ENCODE measurements at regions of chr4 and their contacts with region 1.

Region 1: DNA sequence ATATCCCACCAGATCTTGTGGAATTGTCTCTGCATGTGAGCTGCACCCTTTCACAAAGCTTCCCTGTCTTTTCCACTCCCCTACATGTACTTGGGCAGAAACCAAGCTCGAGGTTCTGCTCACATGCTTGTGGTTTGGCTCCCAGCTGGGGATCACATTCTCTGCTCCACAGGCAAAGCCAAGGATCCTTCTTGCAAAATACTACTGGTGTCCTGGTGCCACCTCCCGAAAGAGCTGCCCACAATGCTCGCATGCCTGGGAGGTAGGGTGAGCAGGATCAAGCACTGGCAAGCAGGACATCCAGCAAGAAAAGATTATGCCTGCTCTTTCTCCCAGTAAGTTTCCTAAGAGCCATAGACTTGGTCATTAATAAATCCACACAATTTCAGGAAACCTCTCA is 45.1 kb upstream of the PPARGC1A start:
- DNase-seq: peak; percentile 61
- ATAC-seq: peak; percentile 74

Region 2: DNA sequence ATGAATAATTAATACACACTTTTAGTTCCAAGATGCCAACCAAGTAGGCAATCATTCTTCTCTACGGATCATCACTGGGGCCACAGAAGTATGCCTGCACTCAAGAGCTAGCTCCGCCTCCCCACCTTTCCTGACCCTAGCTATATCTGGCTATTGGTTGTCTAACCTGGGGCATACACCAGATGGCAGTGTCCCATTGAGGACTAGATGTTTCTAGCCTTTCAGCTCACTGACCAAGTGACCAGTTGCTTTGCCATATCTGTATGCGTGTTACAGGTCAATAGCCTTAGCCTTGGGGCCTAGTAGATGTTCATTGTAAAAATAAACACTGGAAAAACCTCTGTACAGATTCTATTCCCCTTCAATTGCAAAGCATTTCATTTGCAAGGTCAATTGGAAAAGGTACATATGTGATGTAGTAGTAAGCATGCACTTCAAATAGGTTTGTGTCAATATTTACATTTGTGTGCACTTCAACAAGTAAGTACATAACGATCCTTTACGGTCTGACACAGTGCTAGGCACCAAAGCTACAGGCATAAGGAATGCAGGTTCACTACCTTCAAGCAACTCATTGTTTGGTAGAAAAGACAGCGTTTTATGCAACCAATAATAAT is 566.7 kb before region 1 on chr4:
- intact Hi-C with region 1: loop called (anchors 2 kb)
- DNase-seq: no peak
- ATAC-seq: peak; percentile 87

Region 3: DNA sequence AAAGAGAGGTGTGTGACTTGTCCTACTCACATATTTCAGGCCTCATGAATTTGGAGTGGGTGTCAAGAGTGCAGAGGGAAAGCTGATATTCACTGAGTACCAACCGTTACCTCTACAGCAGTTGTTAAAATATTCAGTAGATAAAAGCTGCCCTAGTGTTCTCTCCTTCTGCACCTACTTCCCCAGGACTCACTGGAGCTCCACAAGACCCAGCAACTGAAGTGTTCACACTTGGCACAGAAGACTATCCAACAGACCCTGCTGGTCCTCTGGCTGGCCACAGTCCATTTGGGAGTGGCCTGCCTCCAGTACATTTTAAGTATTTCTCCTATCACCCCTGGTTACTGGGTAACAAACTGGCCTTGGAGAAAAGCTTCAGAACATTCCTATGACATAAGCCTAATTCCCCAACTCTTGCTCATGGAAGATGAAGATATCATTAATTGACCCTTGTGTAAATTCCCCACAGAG is 115.8 kb before region 1 on chr4:
- intact Hi-C with region 1: loop called (anchors 5 kb)
- DNase-seq: peak; percentile 63
- ATAC-seq: peak; percentile 90

Region 4: GRCh38 chr4:23853986-23854660 is 80.8 kb before region 1 on chr4:
- intact Hi-C with region 1: no loop called
- DNase-seq: no peak
- ATAC-seq: peak; percentile 58

Region 5: GRCh38 chr4:24032371-24032989 is 97.6 kb after region 1 on chr4:
- intact Hi-C with region 1: loop called (anchors 5 kb)
- DNase-seq: no peak
- ATAC-seq: peak; percentile 63

Region 6: GRCh38 chr4:24419181-24420034 is 484.5 kb after region 1 on chr4:
- intact Hi-C with region 1: loop called (anchors 5 kb)
- DNase-seq: peak; percentile 86
- ATAC-seq: peak; percentile 88

Measured in Right ventricle myocardium inferior (tissue), 1 donor.